ENCODE measurements at regions of chr12 and their contacts with region 1.

Region 1: GRCh38 chr12:87953256-87953860 is 75.8 kb downstream of the C12orf50 start:
- DNase-seq: peak; percentile 45
- H3K4me3 Mint-ChIP-seq: no peak overlapping the region
- H3K27ac Mint-ChIP-seq: no peak overlapping the region
- H3K4me1 Mint-ChIP-seq: no peaks in the 10 kb centered on the region
- H3K27me3 Mint-ChIP-seq: no peaks in the 10 kb centered on the region
- CTCF ChIP-seq: peak; percentile 51

Region 2: DNA sequence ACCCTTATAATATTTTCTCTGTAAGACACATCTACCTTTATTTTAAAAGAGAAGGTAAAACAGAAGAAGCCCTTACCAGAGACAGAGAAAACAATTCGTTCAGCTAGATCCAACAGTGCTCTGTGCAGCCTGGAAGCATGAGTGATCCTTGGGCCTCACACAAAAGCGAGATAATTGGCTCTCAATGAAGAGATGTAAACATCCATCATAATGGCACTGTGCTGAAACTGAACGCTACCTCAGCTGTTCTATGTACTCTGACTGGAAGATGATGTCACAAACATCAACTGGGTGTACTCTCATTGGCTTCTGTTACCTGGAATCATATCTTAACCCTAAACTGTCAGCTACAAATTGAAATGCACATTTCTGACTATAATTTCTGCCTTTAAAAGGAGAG is 1697.2 kb before region 1 on chr12 and contains the start of gene MGAT4C:
- CTCF ChIA-PET with region 1: no interaction called
- intact Hi-C with region 1: loop called (anchors 5 kb)
- DNase-seq: no peak
- H3K4me3 Mint-ChIP-seq: no peak within 1 kb of the TSS
- H3K27ac Mint-ChIP-seq: no peak within 1 kb of the TSS
- H3K4me1 Mint-ChIP-seq: no peaks in the 10 kb centered on the region
- H3K27me3 Mint-ChIP-seq: no peaks in the 10 kb centered on the region
- CTCF ChIP-seq: no peak
- total RNA-seq, gene MGAT4C: not detected in 2 replicates

Region 3: DNA sequence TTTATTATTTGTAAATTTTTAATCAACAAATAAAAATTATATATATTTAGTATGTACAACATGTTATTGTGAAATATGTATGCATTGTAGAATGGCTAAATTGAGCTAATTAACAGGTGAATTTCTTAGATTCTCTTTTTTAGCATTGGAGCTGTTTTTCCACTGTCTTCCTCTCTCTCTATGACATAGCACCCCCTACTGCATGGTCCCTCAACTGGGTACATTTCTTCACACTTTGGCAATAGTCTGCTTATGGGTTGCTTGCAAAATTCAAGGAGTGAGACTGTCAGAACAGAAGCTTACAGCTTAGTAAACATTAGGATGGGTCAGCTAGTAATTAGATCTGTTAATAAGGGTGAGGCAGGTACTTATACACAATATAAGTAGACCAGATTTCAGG is 1038.6 kb before region 1 on chr12:
- CTCF ChIA-PET with region 1: no interaction called
- intact Hi-C with region 1: loop called (anchors 5 kb)
- DNase-seq: peak; percentile 56
- H3K4me3 Mint-ChIP-seq: no peak overlapping the region
- H3K27ac Mint-ChIP-seq: no peak overlapping the region
- H3K4me1 Mint-ChIP-seq: no peaks in the 10 kb centered on the region
- H3K27me3 Mint-ChIP-seq: no peaks in the 10 kb centered on the region
- CTCF ChIP-seq: peak; percentile 44

Region 4: DNA sequence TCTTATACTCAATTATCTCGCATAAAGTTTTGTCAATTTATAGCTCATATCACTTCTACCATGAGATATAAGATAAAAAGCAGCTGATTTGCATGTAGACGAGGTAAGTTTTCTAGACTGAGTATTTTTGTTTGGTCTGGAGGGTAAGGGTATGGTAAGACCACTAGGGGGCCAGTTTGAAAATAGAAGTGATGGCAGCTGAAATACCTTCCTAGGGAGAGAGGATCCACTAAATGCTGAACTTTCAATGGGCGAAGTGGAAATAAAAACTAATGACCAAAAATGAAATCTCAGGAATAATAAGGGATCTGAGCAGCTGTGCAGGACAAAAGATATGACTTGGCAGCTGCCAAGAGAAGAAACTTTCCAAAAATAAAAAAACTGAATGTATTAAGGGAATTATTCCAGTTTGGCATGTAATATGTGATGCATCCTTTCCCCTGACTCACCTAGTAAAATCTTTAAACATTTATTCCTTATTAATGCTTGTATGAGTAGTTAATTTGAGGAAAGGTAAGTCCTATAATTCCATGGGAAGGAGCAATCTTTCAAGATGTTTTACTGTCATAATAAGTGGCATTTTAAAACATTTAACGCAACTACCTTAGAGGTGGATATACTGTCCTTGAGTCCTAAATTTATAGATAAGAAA is 678.6 kb before region 1 on chr12:
- CTCF ChIA-PET with region 1: no interaction called
- intact Hi-C with region 1: loop called (anchors 5 kb)
- DNase-seq: peak; percentile 17
- H3K4me3 Mint-ChIP-seq: no peak overlapping the region
- H3K27ac Mint-ChIP-seq: no peak overlapping the region
- H3K4me1 Mint-ChIP-seq: no peaks in the 10 kb centered on the region
- H3K27me3 Mint-ChIP-seq: no peaks in the 10 kb centered on the region
- CTCF ChIP-seq: peak; percentile 67

Region 5: GRCh38 chr12:87704374-87704773 is 249.0 kb before region 1 on chr12:
- CTCF ChIA-PET with region 1: no interaction called
- intact Hi-C with region 1: no loop called
- DNase-seq: peak; percentile 27
- H3K4me3 Mint-ChIP-seq: no peak overlapping the region
- H3K27ac Mint-ChIP-seq: no peak overlapping the region
- H3K4me1 Mint-ChIP-seq: no peaks in the 10 kb centered on the region
- H3K27me3 Mint-ChIP-seq: no peaks in the 10 kb centered on the region
- CTCF ChIP-seq: no peak

Region 6: GRCh38 chr12:87866578-87867292 is 86.6 kb before region 1 on chr12:
- CTCF ChIA-PET with region 1: no interaction called
- intact Hi-C with region 1: loop called (anchors 5 kb)
- DNase-seq: peak; percentile 8
- H3K4me3 Mint-ChIP-seq: no peak overlapping the region
- H3K27ac Mint-ChIP-seq: no peak overlapping the region
- H3K4me1 Mint-ChIP-seq: peaks cover 8% of the 10 kb centered on the region
- H3K27me3 Mint-ChIP-seq: no peaks in the 10 kb centered on the region
- CTCF ChIP-seq: peak; percentile 41

Region 7: DNA sequence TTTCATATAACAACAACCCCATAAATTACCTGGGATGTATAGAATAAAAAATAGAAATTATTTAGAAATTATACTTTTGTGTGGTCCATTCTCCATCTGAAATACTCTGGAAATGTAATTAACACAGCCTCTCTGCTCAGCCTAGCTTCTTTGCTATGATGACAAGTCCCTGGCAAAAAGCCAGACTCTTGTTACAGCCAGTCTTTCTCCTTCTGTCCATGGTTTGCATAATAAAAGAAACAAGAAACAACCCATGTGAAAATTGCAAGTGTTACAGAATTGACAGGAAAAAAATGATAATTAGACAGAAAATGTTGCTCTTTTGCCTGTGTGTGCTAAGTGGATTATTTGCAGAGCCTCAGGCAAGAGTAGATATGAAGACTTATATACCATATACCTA is 14.5 kb after region 1 on chr12:
- CTCF ChIA-PET with region 1: no interaction called
- intact Hi-C with region 1: no loop called
- DNase-seq: no peak
- H3K4me3 Mint-ChIP-seq: no peak overlapping the region
- H3K27ac Mint-ChIP-seq: no peak overlapping the region
- H3K4me1 Mint-ChIP-seq: no peaks in the 10 kb centered on the region
- H3K27me3 Mint-ChIP-seq: no peaks in the 10 kb centered on the region
- CTCF ChIP-seq: no peak

Region 8: GRCh38 chr12:88063375-88063774 is 110.0 kb after region 1 on chr12:
- CTCF ChIA-PET with region 1: no interaction called
- intact Hi-C with region 1: no loop called
- DNase-seq: no peak
- H3K4me3 Mint-ChIP-seq: no peak overlapping the region
- H3K27ac Mint-ChIP-seq: peak overlapping the region; percentile 1
- H3K4me1 Mint-ChIP-seq: peaks cover 11% of the 10 kb centered on the region
- H3K27me3 Mint-ChIP-seq: no peaks in the 10 kb centered on the region
- CTCF ChIP-seq: no peak

Measured in Calu3 (cell line).